AG04449 (cell line): ENCODE measurements at regions of chr3 and their contacts with region 1.

Region 1: DNA sequence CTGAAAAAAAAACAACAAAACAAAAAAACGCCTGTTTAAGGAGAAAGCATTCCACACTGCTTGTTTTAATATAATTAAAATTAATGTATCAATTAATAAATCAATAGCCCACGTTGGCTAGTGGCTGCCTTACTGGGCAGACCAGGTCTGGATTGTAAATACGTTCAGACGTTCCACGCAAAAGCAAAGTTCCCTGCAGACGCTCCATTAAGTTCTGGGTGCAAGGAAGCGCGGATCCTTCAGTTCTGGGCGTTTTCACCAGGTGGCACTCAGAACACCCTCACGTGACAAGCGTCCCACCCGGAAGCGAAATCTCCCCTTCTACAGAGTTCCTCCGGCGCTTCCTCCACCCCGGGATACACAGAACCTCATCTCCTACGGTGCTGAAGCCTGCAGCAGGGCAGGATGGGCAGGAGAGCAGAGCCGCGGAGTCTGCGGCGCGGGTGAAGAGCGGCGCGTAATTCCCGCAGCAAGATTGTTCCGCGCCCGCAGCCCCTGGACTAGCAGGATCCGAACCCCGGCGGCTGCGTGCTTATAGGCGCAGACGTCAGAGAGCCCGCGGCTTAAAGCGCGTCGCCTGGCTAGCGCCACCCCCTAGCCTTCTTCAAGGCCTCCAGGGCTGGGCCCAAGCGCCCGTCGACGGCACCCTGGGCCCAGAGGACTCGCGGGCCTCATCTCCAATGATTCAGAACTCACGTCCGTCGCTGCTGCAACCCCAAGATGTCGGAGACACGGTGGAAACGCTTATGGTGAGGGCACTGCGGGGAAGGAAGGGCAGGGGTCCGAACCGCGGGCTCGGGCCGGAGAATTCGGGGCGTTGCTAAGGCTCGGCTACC is at the start of gene SLC25A38:
- DNase-seq: no peak
- H3K4me3 ChIP-seq: peak within 1 kb of the TSS; percentile 93
- CTCF ChIP-seq: peak; percentile 35

Region 2: DNA sequence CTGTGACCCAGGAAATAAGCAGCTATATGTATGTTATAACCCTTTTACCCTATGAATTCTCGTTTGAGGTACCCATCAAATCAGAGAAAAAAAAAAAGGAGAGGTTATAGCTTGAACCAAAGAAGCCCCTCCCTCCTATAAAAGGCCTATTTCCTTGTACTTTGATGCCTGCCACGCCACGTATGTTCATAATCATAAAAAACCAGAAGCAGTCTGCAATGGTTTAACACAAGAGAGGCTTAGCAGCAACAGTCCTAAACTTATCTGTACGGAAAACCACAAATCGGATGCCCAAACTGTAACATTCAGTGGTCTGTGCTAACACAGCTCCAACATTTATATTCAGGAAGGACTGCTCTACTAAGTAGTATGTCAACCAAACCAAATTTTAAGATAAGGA is 32.5 kb before region 1 on chr3:
- CTCF ChIA-PET with region 1: no interaction called
- POLR2A ChIA-PET with region 1: no interaction called
- DNase-seq: no peak
- H3K4me3 ChIP-seq: no peak overlapping the region
- CTCF ChIP-seq: no peak

Region 3: GRCh38 chr3:39406368-39407258 is 23.4 kb after region 1 on chr3 and contains the start of gene RPSA:
- CTCF ChIA-PET with region 1: interaction called, 3 read pairs
- POLR2A ChIA-PET with region 1: interaction called, 14 read pairs
- DNase-seq: peak; percentile 70
- H3K4me3 ChIP-seq: peak within 1 kb of the TSS; percentile 89
- CTCF ChIP-seq: peak; percentile 44

Region 4: GRCh38 chr3:39443530-39443929 is 60.3 kb after region 1 on chr3:
- CTCF ChIA-PET with region 1: no interaction called
- POLR2A ChIA-PET with region 1: no interaction called
- DNase-seq: no peak
- H3K4me3 ChIP-seq: no peak overlapping the region
- CTCF ChIP-seq: no peak

Region 5: GRCh38 chr3:39501968-39502837 is 118.9 kb after region 1 on chr3:
- CTCF ChIA-PET with region 1: no interaction called
- POLR2A ChIA-PET with region 1: no interaction called
- DNase-seq: no peak
- H3K4me3 ChIP-seq: no peak overlapping the region
- CTCF ChIP-seq: no peak

Region 6: DNA sequence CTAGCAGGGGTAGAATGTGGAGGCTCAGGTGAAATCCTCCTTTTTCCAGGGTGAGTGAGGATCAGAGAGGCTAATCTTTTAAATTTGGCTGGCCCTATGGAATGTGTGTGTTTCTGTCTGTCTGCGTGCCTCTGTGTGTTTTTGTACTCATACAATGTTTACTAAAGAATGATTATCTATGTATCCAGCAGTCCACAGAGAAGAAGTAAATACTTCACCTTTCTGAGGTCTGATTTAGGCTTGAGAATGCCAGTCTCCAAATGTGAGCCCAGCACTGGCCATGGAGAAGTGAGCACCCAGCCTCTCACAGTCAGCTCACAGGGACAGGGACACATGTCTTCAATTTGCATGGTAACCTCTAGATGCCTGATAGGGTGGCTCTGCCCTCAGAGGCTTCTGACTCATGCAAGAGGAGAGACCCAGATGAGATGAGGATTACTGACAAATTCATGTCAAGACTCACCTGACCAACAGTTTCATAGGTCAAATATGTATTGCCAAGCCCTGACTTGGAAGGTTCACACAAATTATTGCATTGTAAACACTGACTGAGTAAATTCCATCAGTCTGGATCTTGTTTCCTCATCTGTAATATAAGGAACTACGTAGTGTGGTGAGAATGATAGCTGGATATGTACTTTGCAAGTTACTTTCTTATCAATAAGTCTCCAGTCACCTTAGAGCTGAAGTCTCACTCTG is 1034.7 kb after region 1 on chr3:
- CTCF ChIA-PET with region 1: no interaction called
- POLR2A ChIA-PET with region 1: no interaction called
- DNase-seq: no peak
- H3K4me3 ChIP-seq: no peak overlapping the region
- CTCF ChIP-seq: no peak